ENCODE measurements at regions of chr6 and their contacts with region 1.

Region 1: GRCh38 chr6:11366183-11366933 is 133.9 kb upstream of the NEDD9 start:
- DNase-seq: peak; percentile 84
- ATAC-seq: peak; percentile 92
- H3K4me3 Mint-ChIP-seq: peak overlapping the region; percentile 56
- H3K27ac Mint-ChIP-seq: peak overlapping the region; percentile 89
- H3K4me1 Mint-ChIP-seq: peaks cover 83% of the 10 kb centered on the region
- H3K27me3 Mint-ChIP-seq: no peaks in the 10 kb centered on the region

Region 2: DNA sequence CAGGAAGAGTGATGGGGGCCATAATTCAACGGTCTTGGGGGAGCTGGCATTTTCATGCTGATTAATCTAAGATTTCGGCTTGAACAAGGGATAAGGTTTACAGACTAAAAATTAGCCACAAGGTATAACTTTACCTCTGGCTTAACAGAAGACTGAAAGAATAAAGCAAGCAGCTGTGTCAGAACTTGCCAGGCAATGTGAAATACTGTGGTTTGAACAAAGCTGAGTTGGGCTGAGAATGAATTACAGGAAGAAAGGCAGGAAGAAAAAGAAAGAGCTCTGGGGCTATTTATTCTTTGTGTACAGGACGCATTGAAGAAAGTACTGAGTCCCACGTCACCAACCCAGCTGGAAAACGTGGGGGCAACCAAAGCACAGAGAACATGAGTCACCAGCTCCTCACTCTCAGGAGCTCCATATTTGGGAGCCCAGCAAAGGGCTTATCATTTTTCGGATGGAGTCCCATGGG is 12.4 kb before region 1 on chr6:
- CTCF ChIA-PET with region 1: interaction called, 11 read pairs
- DNase-seq: peak; percentile 83
- ATAC-seq: peak; percentile 93
- H3K4me3 Mint-ChIP-seq: peak overlapping the region; percentile 20
- H3K27ac Mint-ChIP-seq: peak overlapping the region; percentile 86
- H3K4me1 Mint-ChIP-seq: peaks cover 54% of the 10 kb centered on the region
- H3K27me3 Mint-ChIP-seq: no peaks in the 10 kb centered on the region

Region 3: GRCh38 chr6:11381801-11382513 is 15.6 kb after region 1 on chr6:
- CTCF ChIA-PET with region 1: interaction called, 23 read pairs
- DNase-seq: peak; percentile 89
- ATAC-seq: peak; percentile 89
- H3K4me3 Mint-ChIP-seq: peak overlapping the region; percentile 83
- H3K27ac Mint-ChIP-seq: peak overlapping the region; percentile 94
- H3K4me1 Mint-ChIP-seq: peaks cover 66% of the 10 kb centered on the region
- H3K27me3 Mint-ChIP-seq: no peaks in the 10 kb centered on the region

Region 4: GRCh38 chr6:11675601-11676000 is 309.2 kb after region 1 on chr6:
- CTCF ChIA-PET with region 1: no interaction called
- DNase-seq: no peak
- ATAC-seq: no peak
- H3K4me3 Mint-ChIP-seq: no peak overlapping the region
- H3K27ac Mint-ChIP-seq: no peak overlapping the region
- H3K4me1 Mint-ChIP-seq: no peaks in the 10 kb centered on the region
- H3K27me3 Mint-ChIP-seq: peaks cover 34% of the 10 kb centered on the region